Dendritic cell treated with granulocyte-macrophage colony-stimulating factor and Interleukin-4, amounts not matched to agents 40 ng/mL and 50 ng/mL, for 4 days (primary cell): ENCODE measurements at regions of chr14 and their contacts with region 1.

Region 1: GRCh38 chr14:88492272-88493089 is 62.3 kb downstream of the PTPN21 start:
- H3K4me3 Mint-ChIP-seq: peak overlapping the region; percentile 44
- H3K27ac Mint-ChIP-seq: no peak overlapping the region
- H3K4me1 Mint-ChIP-seq: peaks cover 6% of the 10 kb centered on the region
- H3K27me3 Mint-ChIP-seq: peaks cover 4% of the 10 kb centered on the region

Region 2: GRCh38 chr14:88189417-88190191 is 302.9 kb before region 1 on chr14:
- intact Hi-C with region 1: loop called (anchors 5 kb)
- H3K4me3 Mint-ChIP-seq: no peak overlapping the region
- H3K27ac Mint-ChIP-seq: no peak overlapping the region
- H3K4me1 Mint-ChIP-seq: peaks cover 10% of the 10 kb centered on the region
- H3K27me3 Mint-ChIP-seq: peaks cover 12% of the 10 kb centered on the region

Region 3: DNA sequence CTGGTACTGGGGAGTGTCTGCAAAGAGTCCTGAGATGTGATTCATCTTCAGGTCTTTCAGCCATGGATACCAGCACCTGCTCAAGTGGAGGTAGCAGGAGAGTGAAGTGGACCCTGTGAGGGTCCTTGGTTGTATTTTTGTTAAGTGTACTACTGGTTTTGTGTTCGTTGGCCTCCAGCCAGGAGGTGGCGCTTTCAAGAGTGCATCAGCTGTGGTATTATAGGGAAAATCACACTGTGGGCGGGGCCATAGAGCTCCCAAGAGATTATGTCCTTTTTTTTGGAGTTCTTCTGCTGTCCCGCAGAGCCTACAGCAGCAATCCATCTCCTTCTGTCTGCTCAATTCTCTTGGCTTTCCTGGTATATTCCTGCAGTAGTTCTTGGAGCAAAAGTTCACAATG is 40.2 kb before region 1 on chr14:
- intact Hi-C with region 1: no loop called
- H3K4me3 Mint-ChIP-seq: no peak overlapping the region
- H3K27ac Mint-ChIP-seq: no peak overlapping the region
- H3K4me1 Mint-ChIP-seq: no peaks in the 10 kb centered on the region
- H3K27me3 Mint-ChIP-seq: no peaks in the 10 kb centered on the region

Region 4: DNA sequence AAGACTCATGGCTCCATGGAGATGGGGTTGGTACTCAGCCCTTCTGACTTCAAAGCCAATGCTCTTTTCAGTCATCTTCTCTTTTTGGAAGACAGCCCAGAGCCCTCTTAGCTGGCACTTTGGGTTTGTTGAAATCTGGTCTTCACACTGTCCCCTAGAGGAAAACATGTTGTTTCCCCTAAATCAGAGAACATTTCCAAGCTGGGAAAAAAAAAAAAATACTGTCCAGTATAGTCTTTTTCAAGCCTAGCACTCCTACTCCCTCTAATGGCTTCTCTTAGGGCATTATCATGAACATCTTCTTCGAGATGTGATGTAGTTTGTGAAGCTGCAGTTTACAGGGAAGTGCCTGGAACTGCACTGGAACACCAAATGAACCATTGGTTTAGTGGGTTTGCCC is 67.4 kb after region 1 on chr14:
- intact Hi-C with region 1: loop called (anchors 2 kb)
- H3K4me3 Mint-ChIP-seq: no peak overlapping the region
- H3K27ac Mint-ChIP-seq: no peak overlapping the region
- H3K4me1 Mint-ChIP-seq: peaks cover 20% of the 10 kb centered on the region
- H3K27me3 Mint-ChIP-seq: peaks cover 57% of the 10 kb centered on the region